Left colon (tissue), 2 donors: ENCODE measurements at regions of chr14 and their contacts with region 1.

Region 1: GRCh38 chr14:53539489-53540126 is 386.5 kb upstream of the DDHD1 start:
- DNase-seq: peak; percentile 64 to 81
- ATAC-seq: peak; percentile 83

Region 2: DNA sequence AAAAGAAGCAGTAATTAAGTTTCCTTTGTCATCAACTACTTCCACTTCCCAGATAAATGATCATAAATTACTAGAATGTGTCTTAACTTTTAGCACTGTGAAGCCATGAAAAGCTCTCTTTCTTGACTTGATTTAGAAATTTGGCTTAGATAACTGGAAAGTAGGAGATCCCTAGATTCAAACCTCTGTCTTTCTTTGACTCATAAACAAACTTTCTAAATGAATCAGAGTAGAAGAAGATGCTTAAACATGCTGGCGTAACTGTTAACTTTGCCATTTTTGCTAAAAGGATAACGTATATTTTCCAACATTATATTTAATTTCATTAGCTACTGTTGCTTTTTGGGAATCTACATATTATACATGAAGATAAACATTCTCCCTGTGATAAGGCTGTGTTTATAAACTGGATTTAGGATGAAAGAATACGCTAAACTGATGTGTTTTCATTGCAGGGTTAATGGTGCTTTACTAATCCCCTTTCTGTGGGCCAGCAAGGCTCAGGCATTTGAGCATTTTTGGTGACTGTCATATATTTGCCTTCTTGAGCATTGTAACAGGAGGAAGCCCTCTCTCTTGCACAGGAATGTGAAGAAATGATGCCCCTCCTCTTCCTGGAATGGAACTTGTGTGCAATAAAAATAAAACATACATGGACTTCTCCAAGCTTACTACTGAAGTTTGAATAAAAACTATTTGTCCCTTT is 115.6 kb after region 1 on chr14:
- intact Hi-C with region 1: no loop called
- DNase-seq: no peak
- ATAC-seq: no peak

Region 3: GRCh38 chr14:53953002-53953827 is 413.6 kb after region 1 on chr14:
- intact Hi-C with region 1: loop called in 1 of 2 experiments (anchors 10 kb)
- DNase-seq: peak; percentile 80 to 85
- ATAC-seq: peak; percentile 83

Region 4: GRCh38 chr14:54175298-54175942 is 635.8 kb after region 1 on chr14:
- intact Hi-C with region 1: loop called (anchors 5 to 10 kb)
- DNase-seq: peak; percentile 34 to 64
- ATAC-seq: peak; percentile 71

Region 5: GRCh38 chr14:54347997-54348611 is 808.5 kb after region 1 on chr14:
- intact Hi-C with region 1: loop called in 1 of 2 experiments (anchors 10 kb)
- DNase-seq: no peak
- ATAC-seq: peak; percentile 88